SK-MEL-5 (cell line): ENCODE measurements at regions of chr12 and their contacts with region 1.

Region 1: GRCh38 chr12:107522692-107523477 is 162.7 kb upstream of the PWP1 start:
- DNase-seq: peak; percentile 67

Region 2: DNA sequence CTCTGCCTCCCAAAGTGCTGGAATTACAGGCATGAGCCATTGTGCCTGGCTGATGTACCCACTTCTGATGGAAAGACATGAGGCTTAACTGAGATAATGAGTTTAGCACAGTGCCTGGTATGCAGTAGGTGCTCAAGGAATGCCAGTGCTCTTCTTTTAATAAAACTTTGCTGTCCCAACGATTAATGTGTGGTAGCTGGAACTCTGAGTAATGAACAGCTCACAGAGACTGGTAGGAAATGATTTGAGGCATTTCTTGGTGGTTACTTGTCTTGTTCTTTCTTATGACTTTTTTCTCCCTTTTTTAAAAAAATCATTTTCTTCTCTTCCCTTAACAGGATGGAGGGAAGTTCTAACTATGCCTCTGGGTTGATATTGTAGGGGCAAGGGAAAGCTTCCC is 73.0 kb before region 1 on chr12:
- in situ Hi-C with region 1: loop called (anchors 10 kb)
- DNase-seq: no peak